Panc1 (cell line): ENCODE measurements at regions of chr19 and their contacts with region 1.

Region 1: DNA sequence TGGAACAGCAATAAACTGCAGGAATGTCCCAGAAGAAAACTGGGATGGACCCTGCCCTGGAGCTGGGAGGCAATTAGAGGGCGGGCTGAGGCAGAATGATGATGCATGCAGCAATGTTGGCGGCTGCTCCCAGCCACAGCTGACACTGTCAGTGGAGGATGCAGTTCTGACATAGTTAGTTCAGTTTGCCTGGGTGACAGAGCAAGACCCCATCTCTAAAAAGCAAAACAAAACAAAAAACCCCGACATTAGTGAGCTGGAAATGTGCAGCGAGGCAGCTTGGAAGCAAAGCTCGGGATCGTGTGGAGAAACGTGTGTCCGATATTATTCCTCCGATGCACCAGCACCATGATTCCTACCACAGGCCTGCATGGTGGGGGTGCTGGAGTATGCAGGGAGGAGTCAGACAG is 110.1 kb upstream of the UQCRFS1 start:
- DNase-seq: no peak
- ATAC-seq: no peak
- H3K4me3 ChIP-seq: no peak overlapping the region
- H3K27ac ChIP-seq: no peak overlapping the region
- H3K4me1 ChIP-seq: no peaks in the 10 kb centered on the region
- H3K27me3 ChIP-seq: peaks cover 34% of the 10 kb centered on the region
- CTCF ChIP-seq: no peak

Region 2: GRCh38 chr19:29372921-29373797 is 50.1 kb after region 1 on chr19:
- CTCF ChIA-PET with region 1: no interaction called
- POLR2A ChIA-PET with region 1: no interaction called
- in situ Hi-C with region 1: no loop called
- intact Hi-C with region 1: no loop called
- DNase-seq: no peak
- ATAC-seq: no peak
- H3K4me3 ChIP-seq: no peak overlapping the region
- H3K27ac ChIP-seq: no peak overlapping the region
- H3K4me1 ChIP-seq: no peaks in the 10 kb centered on the region
- H3K27me3 ChIP-seq: peaks cover 13% of the 10 kb centered on the region
- CTCF ChIP-seq: no peak

Region 3: DNA sequence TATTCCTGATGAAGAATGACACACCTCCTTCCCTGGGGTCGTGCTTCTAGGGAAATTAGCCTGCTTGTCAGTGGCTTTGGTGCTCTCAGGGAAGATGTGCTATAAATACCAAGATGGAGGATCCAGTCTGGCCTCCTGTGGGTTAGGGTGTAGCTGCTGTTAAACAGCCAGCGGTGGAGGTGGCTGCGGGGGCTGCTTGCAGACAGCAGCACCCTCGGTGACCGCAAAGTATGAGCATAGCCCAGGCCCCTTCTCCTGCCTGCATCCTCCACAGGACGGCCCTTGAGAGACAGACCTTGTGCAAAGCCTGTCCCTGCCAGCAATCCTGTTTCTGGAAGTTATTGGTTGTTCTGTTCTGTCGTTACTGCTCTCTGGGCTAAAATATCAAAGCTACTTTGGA is 214.2 kb after region 1 on chr19:
- CTCF ChIA-PET with region 1: no interaction called
- POLR2A ChIA-PET with region 1: interaction called, 12 read pairs
- in situ Hi-C with region 1: no loop called
- intact Hi-C with region 1: no loop called
- DNase-seq: no peak
- ATAC-seq: no peak
- H3K4me3 ChIP-seq: no peak overlapping the region
- H3K27ac ChIP-seq: no peak overlapping the region
- H3K4me1 ChIP-seq: no peaks in the 10 kb centered on the region
- H3K27me3 ChIP-seq: peaks cover 6% of the 10 kb centered on the region
- CTCF ChIP-seq: no peak